ENCODE measurements at regions of chr9 and their contacts with region 1.

Region 1: GRCh38 chr9:37119907-37120842 is at the start of gene ZCCHC7:
- DNase-seq: peak; percentile 93 to 97 (median 96)
- H3K4me3 ChIP-seq: peak within 1 kb of the TSS; percentile 66 to 100 (median 93)
- H3K27ac ChIP-seq: peak within 1 kb of the TSS; percentile 68 to 96 (median 89)
- H3K27me3 ChIP-seq: no peaks in the 10 kb centered on the region
- CTCF ChIP-seq: peak in 10 of 56 donors; percentile 7 to 45 (median 22)
- total RNA-seq, gene ZCCHC7: 24.0 to 54.3 (median 35.6) TPM

Region 2: GRCh38 chr9:37079370-37080164 is 40.6 kb before region 1 on chr9:
- intact Hi-C with region 1: loop called (anchors 1 to 2 kb)
- DNase-seq: peak; percentile 86 to 95 (median 92)
- H3K4me3 ChIP-seq: peak overlapping the region; percentile 40 to 98 (median 89)
- H3K27ac ChIP-seq: peak overlapping the region in 57 of 59 donors; percentile 10 to 90 (median 78)
- H3K27me3 ChIP-seq: no peaks in the 10 kb centered on the region
- CTCF ChIP-seq: peak in 16 of 56 donors; percentile 5 to 50 (median 18)

Region 3: DNA sequence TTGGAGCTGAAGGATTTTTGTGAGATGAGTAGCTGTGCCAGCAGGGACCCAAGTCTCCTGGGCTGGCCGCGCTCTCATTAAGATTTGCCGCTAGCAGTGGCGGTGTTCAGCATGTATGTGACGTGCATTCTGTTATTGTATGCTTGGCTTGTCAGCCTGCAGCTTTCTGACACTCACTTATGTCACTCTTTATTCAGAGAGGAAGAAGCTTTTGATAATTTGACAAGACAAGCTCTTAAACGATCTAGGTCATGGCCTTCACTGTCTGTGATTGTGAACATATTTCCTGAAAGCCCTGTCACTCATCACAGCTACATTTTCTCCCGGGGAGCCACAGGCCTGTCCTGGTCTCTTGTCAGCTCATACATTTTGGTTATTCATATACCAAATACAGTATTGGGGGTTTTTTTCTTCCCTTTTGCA is 204.1 kb after region 1 on chr9:
- intact Hi-C with region 1: no loop called
- DNase-seq: peak in 1 of 10 donors; percentile 34
- H3K4me3 ChIP-seq: peak overlapping the region in 3 of 59 donors; percentile 1 to 15 (median 9)
- H3K27ac ChIP-seq: peak overlapping the region in 23 of 59 donors; percentile 1 to 58 (median 23)
- H3K27me3 ChIP-seq: no peaks in the 10 kb centered on the region
- CTCF ChIP-seq: no peak